Dorsolateral prefrontal cortex (tissue), 120 donors: ENCODE measurements at regions of chr1 and their contacts with region 1.

Region 1: DNA sequence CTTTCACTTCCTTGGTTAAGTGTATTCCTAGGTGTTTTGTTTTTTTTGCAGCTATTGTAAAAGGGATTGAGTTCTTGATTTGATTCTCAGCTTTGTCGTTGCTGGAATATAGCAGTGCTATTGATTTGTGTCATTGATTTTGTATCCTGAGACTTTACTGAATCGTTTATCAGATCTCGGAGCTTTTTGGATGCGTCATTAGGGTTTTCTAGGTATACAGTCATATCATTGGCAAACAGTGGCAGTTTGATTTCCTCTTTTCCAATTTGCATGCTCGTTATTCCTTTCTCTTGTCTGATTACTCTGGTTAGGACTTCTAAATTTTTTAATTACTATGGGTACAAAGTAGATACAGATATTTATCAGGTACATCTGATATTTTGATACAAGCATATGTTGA is 75.4 kb downstream of the SLC35A3 start:
- DNase-seq: no peak
- H3K4me3 ChIP-seq: no peak overlapping the region
- H3K27ac ChIP-seq: no peak overlapping the region
- H3K27me3 ChIP-seq: no peaks in the 10 kb centered on the region
- CTCF ChIP-seq: no peak

Region 2: DNA sequence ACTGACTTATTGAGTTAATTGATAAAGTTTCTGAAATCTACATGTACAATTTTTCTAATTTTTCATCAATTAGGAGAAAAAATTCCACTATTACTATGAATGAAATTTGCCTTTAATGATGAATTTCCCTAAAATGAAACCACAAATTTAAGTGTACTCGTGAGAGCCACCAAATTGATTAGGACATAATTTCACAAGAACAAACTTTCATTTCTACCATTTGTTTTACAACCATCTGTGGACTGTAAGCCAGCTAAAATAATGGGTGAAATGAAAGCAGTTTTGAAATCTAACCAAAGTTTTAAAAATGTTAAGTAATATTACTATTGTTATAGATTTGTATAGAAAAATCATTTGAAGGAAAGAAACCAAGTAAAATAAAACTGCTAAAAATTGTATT is 153.2 kb before region 1 on chr1:
- intact Hi-C with region 1: no loop called
- DNase-seq: no peak
- H3K4me3 ChIP-seq: no peak overlapping the region
- H3K27ac ChIP-seq: no peak overlapping the region
- H3K27me3 ChIP-seq: no peaks in the 10 kb centered on the region
- CTCF ChIP-seq: no peak

Region 3: GRCh38 chr1:99975529-99975928 is 69.7 kb before region 1 on chr1:
- intact Hi-C with region 1: no loop called
- DNase-seq: no peak
- H3K4me3 ChIP-seq: no peak overlapping the region
- H3K27ac ChIP-seq: no peak overlapping the region
- H3K27me3 ChIP-seq: no peaks in the 10 kb centered on the region
- CTCF ChIP-seq: no peak

Region 4: DNA sequence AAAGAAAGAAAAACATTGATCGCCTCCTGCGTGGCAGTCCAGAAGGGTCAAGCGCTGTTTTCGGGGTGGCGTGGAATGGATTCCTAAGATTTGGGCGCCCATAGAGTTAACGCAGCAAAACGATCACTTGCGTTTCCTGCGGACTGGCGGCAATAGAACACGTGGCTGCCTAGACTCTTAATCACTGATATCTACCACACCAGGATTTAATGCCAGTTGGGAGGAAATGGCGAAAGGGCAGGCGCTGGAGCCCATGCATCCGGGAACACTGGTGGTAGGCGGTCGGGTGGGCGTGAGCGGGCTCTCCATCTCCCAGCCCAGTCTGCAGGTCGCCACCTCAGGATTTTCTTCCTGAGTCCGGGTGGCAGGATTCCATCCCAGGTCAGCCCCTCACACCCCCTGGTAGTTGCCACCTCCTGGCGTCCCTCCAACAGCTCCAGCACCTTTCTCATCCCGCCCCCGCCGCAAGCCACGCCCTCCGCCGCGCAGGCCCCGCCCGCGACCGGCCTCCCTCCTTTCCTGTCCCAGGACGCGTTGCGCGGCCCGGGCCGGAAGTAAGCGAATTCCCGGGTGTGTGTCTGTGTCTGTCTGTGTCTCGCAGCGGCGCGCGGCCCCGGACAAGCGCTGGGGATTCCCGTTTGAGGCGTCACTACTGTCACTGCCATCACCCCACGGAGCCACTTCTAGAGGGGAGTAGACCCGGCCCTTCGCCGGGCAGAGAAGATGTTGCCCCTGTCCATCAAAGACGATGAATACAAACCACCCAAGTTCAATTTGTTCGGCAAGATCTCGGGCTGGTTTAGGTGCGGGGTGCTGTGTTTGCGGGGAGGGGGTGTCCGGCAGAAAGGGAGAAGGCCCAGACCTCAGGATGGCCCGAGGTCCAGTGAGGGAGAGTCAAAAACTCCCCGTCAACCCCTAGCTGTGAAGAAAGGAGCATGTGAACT is 850.6 kb after region 1 on chr1 and contains the start of gene SLC30A7:
- intact Hi-C with region 1: loop called in 1 of 2 experiments (anchors 10 kb)
- DNase-seq: peak; percentile 89 to 96 (median 93)
- H3K4me3 ChIP-seq: peak within 1 kb of the TSS; percentile 68 to 98 (median 88)
- H3K27ac ChIP-seq: peak within 1 kb of the TSS; percentile 74 to 97 (median 92)
- H3K27me3 ChIP-seq: no peaks in the 10 kb centered on the region
- CTCF ChIP-seq: peak in 7 of 56 donors; percentile 9 to 37 (median 21)
- total RNA-seq, gene SLC30A7: 14.8 to 30.3 (median 21.4) TPM